B cell (primary cell): ENCODE measurements at regions of chr7 and their contacts with region 1.

Region 1: DNA sequence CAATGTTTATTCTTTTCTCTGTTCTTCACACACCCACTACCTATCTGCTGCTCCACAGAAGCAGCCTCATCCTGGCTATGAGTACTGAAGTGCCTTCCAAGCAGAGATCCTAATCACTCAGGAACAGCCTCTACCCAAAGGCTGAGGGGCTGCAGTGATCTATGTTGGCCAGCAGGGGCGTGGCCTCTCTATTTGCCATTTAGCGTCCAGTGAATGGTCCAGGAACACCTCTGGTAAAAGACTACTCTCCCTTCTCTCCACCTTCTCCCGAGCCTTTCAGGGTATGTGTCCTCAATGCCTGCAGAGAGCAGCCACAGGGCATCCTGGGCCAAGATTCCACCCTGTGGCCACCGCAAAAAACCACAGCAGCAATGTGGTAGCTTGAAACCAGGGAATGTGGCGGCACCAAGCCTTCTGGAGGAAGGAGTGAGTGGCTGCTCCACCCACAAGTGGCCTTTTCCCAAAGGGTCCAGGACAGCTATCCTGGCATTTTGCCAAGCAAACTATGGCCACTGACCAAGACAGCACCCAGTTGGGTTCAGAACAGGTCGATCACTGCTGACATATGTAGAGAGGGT is 70.9 kb downstream of the SYPL1 start:
- DNase-seq: peak; percentile 62
- ATAC-seq: peak; percentile 61
- H3K4me3 ChIP-seq: no peak overlapping the region
- H3K4me3 Mint-ChIP-seq: no peak overlapping the region
- H3K27ac ChIP-seq: no peak overlapping the region
- H3K27ac Mint-ChIP-seq: peak overlapping the region; percentile 5
- H3K4me1 ChIP-seq: peaks cover 14 to 23% of the 10 kb centered on the region in 2 donors
- H3K4me1 Mint-ChIP-seq: peaks cover 13% of the 10 kb centered on the region
- H3K27me3 ChIP-seq: peaks cover 0 to 9% (median 2%) of the 10 kb centered on the region in 4 experiments
- H3K27me3 Mint-ChIP-seq: no peaks in the 10 kb centered on the region
- CTCF ChIP-seq: peak; percentile 90

Region 2: DNA sequence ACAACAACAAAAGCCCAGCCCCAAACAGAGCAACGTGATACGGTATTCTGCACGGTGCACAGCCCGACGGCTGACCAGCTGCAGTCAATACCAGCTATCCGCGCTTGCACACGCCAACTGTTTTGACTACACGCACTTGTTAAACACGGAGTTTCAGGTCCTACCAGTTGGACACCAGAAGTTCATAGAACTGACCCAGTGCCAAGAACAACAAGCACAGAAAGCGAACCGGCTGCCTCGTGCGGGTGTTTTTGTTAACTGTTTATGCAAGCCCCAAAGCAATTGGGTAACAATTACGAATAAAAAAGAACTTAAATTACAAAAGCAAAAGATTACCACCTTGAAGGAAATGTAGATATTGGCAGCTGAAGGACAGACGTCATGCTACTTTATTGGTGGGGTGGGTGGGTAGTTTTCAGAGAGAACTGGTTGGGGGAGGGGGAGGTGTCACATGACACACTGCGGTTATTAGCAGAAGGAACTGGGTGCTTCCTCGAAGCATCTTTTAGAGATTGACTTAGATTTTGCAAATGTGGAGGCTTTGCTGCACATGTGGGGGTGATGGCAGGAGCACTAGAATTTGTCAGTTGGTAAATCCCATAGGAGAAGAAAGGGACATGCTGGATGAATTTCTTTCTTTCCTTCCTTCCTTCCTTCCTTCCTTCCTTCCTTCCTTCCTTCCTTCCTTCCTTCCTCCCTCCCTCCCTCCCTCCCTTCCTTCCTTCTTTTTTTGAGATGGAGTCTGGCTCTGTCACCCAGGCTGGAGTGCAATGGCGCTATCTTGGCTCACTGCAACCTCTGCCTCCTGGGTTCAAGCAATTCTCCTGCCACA is 349.3 kb before region 1 on chr7:
- CTCF ChIA-PET with region 1: interaction called, 22 read pairs
- POLR2A ChIA-PET with region 1: no interaction called
- intact Hi-C with region 1: loop called (anchors 10 kb)
- DNase-seq: peak; percentile 90
- ATAC-seq: peak; percentile 77
- H3K4me3 ChIP-seq: peak overlapping the region; percentile 61 to 94 (median 80)
- H3K4me3 Mint-ChIP-seq: peak overlapping the region; percentile 95
- H3K27ac ChIP-seq: peak overlapping the region; percentile 90 to 97
- H3K27ac Mint-ChIP-seq: peak overlapping the region; percentile 99
- H3K4me1 ChIP-seq: peaks cover 5 to 29% of the 10 kb centered on the region in 2 donors
- H3K4me1 Mint-ChIP-seq: peaks cover 54% of the 10 kb centered on the region
- H3K27me3 ChIP-seq: no peaks in the 10 kb centered on the region
- H3K27me3 Mint-ChIP-seq: no peaks in the 10 kb centered on the region
- CTCF ChIP-seq: no peak

Region 3: GRCh38 chr7:105876091-105876963 is 164.9 kb before region 1 on chr7 and contains the start of gene ATXN7L1:
- CTCF ChIA-PET with region 1: interaction called, 5 read pairs
- POLR2A ChIA-PET with region 1: no interaction called
- intact Hi-C with region 1: loop called (anchors 2 kb)
- DNase-seq: peak; percentile 87
- ATAC-seq: peak; percentile 99
- H3K4me3 ChIP-seq: peak within 1 kb of the TSS; percentile 47 to 68 (median 64)
- H3K4me3 Mint-ChIP-seq: peak within 1 kb of the TSS; percentile 90
- H3K27ac ChIP-seq: no peak within 1 kb of the TSS
- H3K27ac Mint-ChIP-seq: peak within 1 kb of the TSS; percentile 42
- H3K4me1 ChIP-seq: peaks cover 13 to 15% of the 10 kb centered on the region in 2 donors
- H3K4me1 Mint-ChIP-seq: peaks cover 23% of the 10 kb centered on the region
- H3K27me3 ChIP-seq: peaks cover 0 to 25% (median 8%) of the 10 kb centered on the region in 4 experiments
- H3K27me3 Mint-ChIP-seq: peaks cover 14% of the 10 kb centered on the region
- CTCF ChIP-seq: peak; percentile 31
- total RNA-seq, gene ATXN7L1: 37.0 and 40.6 TPM in 2 replicates

Region 4: DNA sequence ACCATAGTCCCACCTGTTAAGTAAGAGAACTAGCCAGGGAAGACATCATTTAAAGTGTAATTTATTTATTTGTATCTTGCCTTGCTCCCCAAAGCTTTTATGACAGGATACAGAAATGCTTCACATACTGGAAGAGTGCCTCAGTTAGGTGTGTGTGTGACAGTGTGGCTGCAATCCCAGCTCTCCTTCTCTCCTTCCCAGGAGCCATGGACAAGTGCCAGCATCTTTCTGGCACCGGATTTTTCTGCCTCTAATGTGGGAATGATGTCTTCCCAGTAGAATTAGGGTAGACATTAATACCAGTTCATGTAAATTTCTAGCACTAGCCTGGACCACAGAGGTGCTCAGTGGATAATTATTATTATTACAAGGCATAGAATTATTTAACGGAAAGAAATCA is 134.5 kb before region 1 on chr7:
- CTCF ChIA-PET with region 1: no interaction called
- POLR2A ChIA-PET with region 1: no interaction called
- intact Hi-C with region 1: no loop called
- DNase-seq: no peak
- ATAC-seq: no peak
- H3K4me3 ChIP-seq: no peak overlapping the region
- H3K4me3 Mint-ChIP-seq: no peak overlapping the region
- H3K27ac ChIP-seq: no peak overlapping the region
- H3K27ac Mint-ChIP-seq: no peak overlapping the region
- H3K4me1 ChIP-seq: no peaks in the 10 kb centered on the region
- H3K4me1 Mint-ChIP-seq: no peaks in the 10 kb centered on the region
- H3K27me3 ChIP-seq: no peaks in the 10 kb centered on the region
- H3K27me3 Mint-ChIP-seq: peaks cover 9% of the 10 kb centered on the region
- CTCF ChIP-seq: no peak

Region 5: DNA sequence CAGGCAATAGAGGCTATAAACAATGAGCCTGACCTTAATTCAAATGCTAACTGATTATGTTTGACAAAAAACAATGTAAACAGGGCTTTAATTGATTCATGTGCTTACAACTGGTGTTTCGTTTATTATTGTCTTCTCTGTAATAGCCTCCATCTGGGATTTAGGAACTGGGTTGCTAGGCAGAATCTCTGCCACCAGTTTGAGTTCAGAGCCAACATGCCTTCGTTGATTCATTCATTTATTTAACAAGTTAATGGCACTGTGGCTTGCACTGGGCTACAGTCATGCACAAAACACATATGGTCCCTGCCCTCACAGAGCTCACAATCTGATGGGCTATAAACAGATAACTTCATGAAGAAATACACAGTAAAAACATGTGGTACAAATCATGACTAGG is 97.7 kb before region 1 on chr7:
- CTCF ChIA-PET with region 1: no interaction called
- POLR2A ChIA-PET with region 1: no interaction called
- intact Hi-C with region 1: no loop called
- DNase-seq: no peak
- ATAC-seq: no peak
- H3K4me3 ChIP-seq: no peak overlapping the region
- H3K4me3 Mint-ChIP-seq: no peak overlapping the region
- H3K27ac ChIP-seq: no peak overlapping the region
- H3K27ac Mint-ChIP-seq: no peak overlapping the region
- H3K4me1 ChIP-seq: no peaks in the 10 kb centered on the region
- H3K4me1 Mint-ChIP-seq: no peaks in the 10 kb centered on the region
- H3K27me3 ChIP-seq: no peaks in the 10 kb centered on the region
- H3K27me3 Mint-ChIP-seq: no peaks in the 10 kb centered on the region
- CTCF ChIP-seq: no peak

Region 6: GRCh38 chr7:106009403-106010226 is 31.6 kb before region 1 on chr7:
- CTCF ChIA-PET with region 1: interaction called, 7 read pairs
- POLR2A ChIA-PET with region 1: interaction called, 4 read pairs
- intact Hi-C with region 1: loop called (anchors 1 kb)
- DNase-seq: peak; percentile 80
- ATAC-seq: peak; percentile 98
- H3K4me3 ChIP-seq: no peak overlapping the region
- H3K4me3 Mint-ChIP-seq: peak overlapping the region; percentile 46
- H3K27ac ChIP-seq: no peak overlapping the region
- H3K27ac Mint-ChIP-seq: peak overlapping the region; percentile 28
- H3K4me1 ChIP-seq: peaks cover 17 to 18% of the 10 kb centered on the region in 2 donors
- H3K4me1 Mint-ChIP-seq: peaks cover 18% of the 10 kb centered on the region
- H3K27me3 ChIP-seq: peaks cover 0 to 4% (median under 1%) of the 10 kb centered on the region in 4 experiments
- H3K27me3 Mint-ChIP-seq: peaks cover 4% of the 10 kb centered on the region
- CTCF ChIP-seq: peak; percentile 88

Region 7: DNA sequence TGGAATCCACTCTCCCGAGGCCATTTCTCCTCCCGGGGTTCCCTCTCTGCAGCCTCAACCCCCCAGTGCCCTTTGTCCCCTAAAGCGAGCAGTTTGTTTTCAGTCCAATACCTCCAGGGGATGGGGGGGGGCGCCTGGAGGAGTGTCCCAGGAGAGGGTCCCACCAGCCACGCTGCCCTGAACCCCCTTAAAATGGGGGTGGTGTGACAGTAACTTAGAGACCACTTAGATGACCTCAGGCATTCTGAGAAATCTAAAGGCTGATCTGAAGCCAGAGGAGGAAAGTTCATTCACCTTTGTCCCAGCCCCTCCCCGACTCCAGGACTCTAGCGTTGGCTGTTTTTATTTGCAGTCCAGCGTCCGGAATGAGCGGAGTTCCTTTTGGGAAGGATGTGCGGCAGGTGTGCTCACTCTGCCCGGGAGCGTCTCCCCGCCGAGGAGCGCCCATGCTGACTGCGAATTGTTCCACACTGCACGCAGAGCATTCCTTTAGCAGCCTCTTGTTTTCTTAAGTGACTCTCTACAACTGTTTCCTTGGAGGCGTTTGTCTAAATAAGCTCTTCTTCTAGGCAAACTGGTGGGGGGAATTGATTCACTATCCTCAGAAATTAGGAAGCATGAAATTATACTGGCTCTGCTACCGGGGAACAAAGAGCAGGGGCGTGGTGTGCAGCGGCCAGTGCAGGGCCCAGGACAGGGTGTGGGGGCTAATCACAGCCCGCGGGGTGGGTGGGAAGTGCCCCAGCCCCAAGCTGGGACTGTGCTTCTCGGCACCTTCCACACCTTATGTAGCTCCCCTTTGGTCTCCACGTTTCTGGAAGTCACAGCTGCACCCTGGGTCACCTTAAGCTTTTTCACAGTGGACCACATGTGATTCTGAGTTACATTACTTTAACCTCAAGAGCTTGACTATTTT is 24.6 kb after region 1 on chr7:
- CTCF ChIA-PET with region 1: no interaction called
- POLR2A ChIA-PET with region 1: no interaction called
- intact Hi-C with region 1: no loop called
- DNase-seq: no peak
- ATAC-seq: no peak
- H3K4me3 ChIP-seq: no peak overlapping the region
- H3K4me3 Mint-ChIP-seq: no peak overlapping the region
- H3K27ac ChIP-seq: no peak overlapping the region
- H3K27ac Mint-ChIP-seq: peak overlapping the region; percentile 32
- H3K4me1 ChIP-seq: peaks cover 92 to 100% of the 10 kb centered on the region in 2 donors
- H3K4me1 Mint-ChIP-seq: peaks cover 94% of the 10 kb centered on the region
- H3K27me3 ChIP-seq: no peaks in the 10 kb centered on the region
- H3K27me3 Mint-ChIP-seq: no peaks in the 10 kb centered on the region
- CTCF ChIP-seq: no peak

Region 8: GRCh38 chr7:106166655-106167342 is 125.6 kb after region 1 on chr7:
- CTCF ChIA-PET with region 1: interaction called, 20 read pairs
- POLR2A ChIA-PET with region 1: no interaction called
- intact Hi-C with region 1: no loop called
- DNase-seq: peak; percentile 73
- ATAC-seq: peak; percentile 47
- H3K4me3 ChIP-seq: no peak overlapping the region
- H3K4me3 Mint-ChIP-seq: no peak overlapping the region
- H3K27ac ChIP-seq: no peak overlapping the region
- H3K27ac Mint-ChIP-seq: no peak overlapping the region
- H3K4me1 ChIP-seq: no peaks in the 10 kb centered on the region
- H3K4me1 Mint-ChIP-seq: peaks cover 10% of the 10 kb centered on the region
- H3K27me3 ChIP-seq: peaks cover 0 to 8% (median 0%) of the 10 kb centered on the region in 4 experiments
- H3K27me3 Mint-ChIP-seq: no peaks in the 10 kb centered on the region
- CTCF ChIP-seq: peak; percentile 95

Region 9: DNA sequence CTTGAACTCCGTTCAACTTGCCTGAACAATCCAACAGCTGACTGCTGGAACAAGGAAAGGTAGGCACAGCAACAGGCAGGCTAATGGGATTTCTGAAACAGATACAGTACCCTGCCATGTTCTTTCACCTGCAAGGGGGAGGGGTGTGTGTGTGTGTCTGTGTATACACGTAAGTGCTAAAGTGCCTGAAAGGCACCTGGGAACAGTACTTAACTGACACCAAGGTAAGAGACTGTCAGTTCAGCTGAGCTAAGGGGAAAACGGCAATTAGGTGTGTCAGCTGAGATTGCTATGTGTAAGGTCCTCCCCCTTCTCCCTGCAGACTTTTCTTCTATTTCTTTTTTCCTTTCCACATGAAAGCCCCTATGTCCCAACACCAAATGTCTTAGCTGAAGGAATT is 216.5 kb after region 1 on chr7:
- CTCF ChIA-PET with region 1: no interaction called
- POLR2A ChIA-PET with region 1: no interaction called
- intact Hi-C with region 1: no loop called
- DNase-seq: peak; percentile 40
- ATAC-seq: no peak
- H3K4me3 ChIP-seq: no peak overlapping the region
- H3K4me3 Mint-ChIP-seq: no peak overlapping the region
- H3K27ac ChIP-seq: no peak overlapping the region
- H3K27ac Mint-ChIP-seq: no peak overlapping the region
- H3K4me1 ChIP-seq: no peaks in the 10 kb centered on the region
- H3K4me1 Mint-ChIP-seq: peaks cover 9% of the 10 kb centered on the region
- H3K27me3 ChIP-seq: no peaks in the 10 kb centered on the region
- H3K27me3 Mint-ChIP-seq: no peaks in the 10 kb centered on the region
- CTCF ChIP-seq: no peak